Upper lobe of right lung (tissue), 1 donor: ENCODE measurements at regions of chr4 and their contacts with region 1.

Region 1: DNA sequence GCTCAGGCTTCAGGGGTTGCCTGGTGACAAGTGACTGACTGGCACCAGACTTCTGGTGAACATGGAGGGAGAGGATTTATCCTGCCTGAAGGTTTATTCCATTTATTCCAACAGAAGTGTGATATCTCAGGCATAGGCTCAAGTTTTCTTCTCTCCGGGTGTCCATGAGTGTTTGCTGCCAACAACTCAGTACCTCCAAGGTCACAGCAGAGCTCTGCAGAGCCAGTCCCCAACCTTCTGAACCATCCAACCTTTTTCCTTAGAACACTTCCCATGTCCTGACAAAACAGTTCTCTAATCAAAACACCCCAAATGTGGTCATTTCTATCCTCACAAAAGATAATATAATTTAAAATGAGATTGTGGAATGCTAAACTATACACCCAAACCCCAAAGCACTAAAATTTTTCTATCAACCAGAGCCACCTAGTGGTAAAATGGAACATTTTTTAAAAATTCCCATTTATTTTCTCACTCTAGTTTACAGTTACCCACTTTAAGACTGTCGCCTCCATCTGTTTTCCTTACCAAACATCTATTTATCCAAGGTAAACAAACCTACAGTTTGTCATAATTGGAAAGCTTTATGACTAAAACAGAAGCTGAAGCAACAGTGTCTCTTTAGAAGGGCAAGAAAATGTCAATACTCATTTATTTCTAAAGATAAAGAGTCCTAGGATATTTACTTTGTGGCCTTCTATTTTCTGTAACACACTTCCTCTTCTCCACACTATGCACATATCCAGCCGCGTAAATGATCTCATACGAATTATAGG is 39.6 kb downstream of the TMEM154 start:
- DNase-seq: no peak
- ATAC-seq: no peak
- H3K4me3 ChIP-seq: no peak overlapping the region
- H3K27ac ChIP-seq: no peak overlapping the region
- H3K4me1 ChIP-seq: no peaks in the 10 kb centered on the region
- H3K27me3 ChIP-seq: no peaks in the 10 kb centered on the region
- CTCF ChIP-seq: peak; percentile 64

Region 2: GRCh38 chr4:152500800-152501434 is 139.3 kb before region 1 on chr4:
- intact Hi-C with region 1: loop called (anchors 10 kb)
- DNase-seq: no peak
- ATAC-seq: peak; percentile 85
- H3K4me3 ChIP-seq: no peak overlapping the region
- H3K27ac ChIP-seq: no peak overlapping the region
- H3K4me1 ChIP-seq: no peaks in the 10 kb centered on the region
- H3K27me3 ChIP-seq: no peaks in the 10 kb centered on the region
- CTCF ChIP-seq: peak; percentile 86

Region 3: GRCh38 chr4:152894673-152895072 is 254.4 kb after region 1 on chr4:
- intact Hi-C with region 1: no loop called
- DNase-seq: no peak
- ATAC-seq: peak; percentile 14
- H3K4me3 ChIP-seq: no peak overlapping the region
- H3K27ac ChIP-seq: no peak overlapping the region
- H3K4me1 ChIP-seq: no peaks in the 10 kb centered on the region
- H3K27me3 ChIP-seq: no peaks in the 10 kb centered on the region
- CTCF ChIP-seq: no peak